MCF 10A (cell line): ENCODE measurements at regions of chr10 and their contacts with region 1.

Region 1: GRCh38 chr10:59068581-59069191 is 107.8 kb upstream of the PHYHIPL start:
- DNase-seq: no peak
- H3K4me3 Mint-ChIP-seq: no peak overlapping the region
- H3K27ac Mint-ChIP-seq: no peak overlapping the region
- H3K4me1 Mint-ChIP-seq: no peaks in the 10 kb centered on the region
- H3K27me3 Mint-ChIP-seq: peaks cover 18% of the 10 kb centered on the region
- CTCF ChIP-seq: no peak

Region 2: DNA sequence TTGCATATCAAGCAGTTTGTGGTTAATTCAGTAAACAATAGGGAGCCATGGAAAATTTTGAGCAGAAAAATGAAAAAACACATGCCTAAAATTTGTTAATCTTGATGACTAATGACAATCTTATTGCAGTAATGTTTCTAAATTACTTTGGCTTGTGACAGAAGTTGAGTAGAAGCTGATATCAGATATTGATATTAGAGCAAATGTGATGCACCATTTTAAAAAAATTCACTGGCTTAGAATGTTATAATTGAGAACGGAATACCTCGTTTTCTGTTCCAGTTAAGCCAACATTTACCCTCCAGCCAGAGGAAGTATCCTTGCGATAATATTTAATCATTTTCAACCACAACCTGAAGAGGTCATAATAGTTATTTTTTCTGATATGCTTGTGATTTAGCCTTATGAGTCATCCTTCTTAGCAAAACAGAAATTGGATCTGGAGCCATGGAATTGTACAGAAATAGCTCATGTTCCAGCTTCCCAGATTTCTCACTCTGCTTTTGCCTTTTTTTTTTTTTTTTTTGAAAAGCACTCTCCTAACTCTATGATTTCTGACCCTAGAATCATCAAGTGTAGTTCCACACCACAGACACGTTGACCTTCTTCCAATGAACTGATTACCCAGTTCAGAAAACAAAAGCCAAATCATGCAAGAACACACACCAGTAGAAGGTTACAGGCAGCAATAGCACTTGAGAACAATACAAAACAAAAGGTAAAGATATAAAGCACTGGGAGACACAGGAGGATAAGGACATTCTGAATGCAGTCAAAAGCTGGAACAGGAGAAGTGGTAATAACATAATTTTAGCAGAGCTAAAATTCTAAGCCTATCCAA is 10.9 kb after region 1 on chr10:
- CTCF ChIA-PET with region 1: interaction called, 11 read pairs
- POLR2A ChIA-PET with region 1: no interaction called
- intact Hi-C with region 1: no loop called
- DNase-seq: peak; percentile 75
- H3K4me3 Mint-ChIP-seq: no peak overlapping the region
- H3K27ac Mint-ChIP-seq: no peak overlapping the region
- H3K4me1 Mint-ChIP-seq: peaks cover 16% of the 10 kb centered on the region
- H3K27me3 Mint-ChIP-seq: peaks cover 30% of the 10 kb centered on the region
- CTCF ChIP-seq: no peak